RWPE1 (cell line): ENCODE measurements at regions of chr19 and their contacts with region 1.

Region 1: GRCh38 chr19:40716655-40717324 is at the starts of genes COQ8B and ITPKC:
- DNase-seq: peak; percentile 92
- H3K27ac ChIP-seq: peak within 1 kb of the TSS; percentile 100
- CTCF ChIP-seq: no peak

Region 2: GRCh38 chr19:40750059-40750873 is 33.5 kb after region 1 on chr19 and contains the start of gene ACTMAP:
- CTCF ChIA-PET with region 1: interaction called, 3 read pairs
- POLR2A ChIA-PET with region 1: interaction called, 10 read pairs
- DNase-seq: peak; percentile 100
- H3K27ac ChIP-seq: peak within 1 kb of the TSS; percentile 95
- CTCF ChIP-seq: no peak

Region 3: GRCh38 chr19:40768869-40769268 is 52.1 kb after region 1 on chr19:
- CTCF ChIA-PET with region 1: no interaction called
- POLR2A ChIA-PET with region 1: no interaction called
- DNase-seq: no peak
- H3K27ac ChIP-seq: peak overlapping the region; percentile 21
- CTCF ChIP-seq: no peak